ENCODE measurements at regions of chr19 and their contacts with region 1.

Region 1: DNA sequence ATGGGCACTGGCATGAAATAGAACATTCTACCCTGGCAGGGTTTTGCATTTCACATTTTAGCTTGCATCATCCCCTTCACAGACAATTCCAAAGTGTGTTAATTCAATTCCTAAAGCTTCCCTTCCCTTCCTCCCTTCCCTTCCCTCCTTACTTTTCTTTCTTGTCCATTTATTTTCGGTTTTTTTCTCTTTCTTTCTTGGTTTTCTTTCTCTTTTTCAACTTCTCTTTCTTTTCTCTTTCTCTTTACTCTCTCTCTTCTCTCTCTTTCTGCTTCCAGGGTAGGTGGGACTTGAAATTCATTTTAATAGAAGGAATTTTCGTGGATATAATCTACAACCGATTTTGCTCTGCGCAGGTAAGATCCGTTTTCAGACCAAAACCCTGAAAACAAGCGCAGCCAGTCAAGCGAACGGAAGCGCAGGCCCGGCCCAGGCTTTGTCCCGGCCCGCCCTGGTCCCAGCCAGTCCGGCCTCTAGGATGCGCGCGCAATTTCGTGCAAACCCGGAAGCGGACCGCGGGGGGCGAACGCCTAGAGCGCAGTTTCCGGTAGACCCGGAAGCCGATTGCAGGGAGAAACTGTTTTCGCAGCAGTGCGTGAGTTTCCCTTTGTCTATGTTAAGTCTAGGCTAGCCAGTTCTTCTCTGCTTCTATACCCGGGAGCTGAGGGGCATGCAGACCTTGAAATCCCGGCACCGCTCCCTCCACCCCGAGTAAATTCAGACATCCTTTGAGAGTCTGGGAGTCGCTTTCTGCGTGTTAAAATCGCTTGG is at the start of gene ZNF528:
- DNase-seq: peak; percentile 79 to 96 (median 90)
- ATAC-seq: peak; percentile 98 to 99
- H3K4me3 Mint-ChIP-seq: peak within 1 kb of the TSS; percentile 87 to 99 (median 92)
- H3K27ac Mint-ChIP-seq: peak within 1 kb of the TSS; percentile 87 to 99 (median 94)
- H3K4me1 Mint-ChIP-seq: peaks cover 13 to 27% (median 21%) of the 10 kb centered on the region in 4 donors
- H3K27me3 Mint-ChIP-seq: no peaks in the 10 kb centered on the region
- polyA plus RNA-seq, gene ZNF528: 9.2 to 12.4 (median 11.0) TPM

Region 2: GRCh38 chr19:52369559-52370340 is 27.7 kb before region 1 on chr19 and contains the start of gene ZNF880:
- POLR2A ChIA-PET with region 1: interaction called, 16 read pairs
- DNase-seq: peak; percentile 79 to 96 (median 91)
- ATAC-seq: peak; percentile 95 to 97
- H3K4me3 Mint-ChIP-seq: peak within 1 kb of the TSS; percentile 91 to 97 (median 96)
- H3K27ac Mint-ChIP-seq: peak within 1 kb of the TSS; percentile 96 to 100 (median 98)
- H3K4me1 Mint-ChIP-seq: peaks cover 8 to 21% (median 16%) of the 10 kb centered on the region in 4 donors
- H3K27me3 Mint-ChIP-seq: peaks cover 0 to 1% (median 0%) of the 10 kb centered on the region in 5 donors
- polyA plus RNA-seq, gene ZNF880: 38.7 to 46.8 (median 40.4) TPM

Measured in naive thymus-derived CD8-positive, alpha-beta T cell (primary cell).